ENCODE measurements at regions of chr16 and their contacts with region 1.

Region 1: DNA sequence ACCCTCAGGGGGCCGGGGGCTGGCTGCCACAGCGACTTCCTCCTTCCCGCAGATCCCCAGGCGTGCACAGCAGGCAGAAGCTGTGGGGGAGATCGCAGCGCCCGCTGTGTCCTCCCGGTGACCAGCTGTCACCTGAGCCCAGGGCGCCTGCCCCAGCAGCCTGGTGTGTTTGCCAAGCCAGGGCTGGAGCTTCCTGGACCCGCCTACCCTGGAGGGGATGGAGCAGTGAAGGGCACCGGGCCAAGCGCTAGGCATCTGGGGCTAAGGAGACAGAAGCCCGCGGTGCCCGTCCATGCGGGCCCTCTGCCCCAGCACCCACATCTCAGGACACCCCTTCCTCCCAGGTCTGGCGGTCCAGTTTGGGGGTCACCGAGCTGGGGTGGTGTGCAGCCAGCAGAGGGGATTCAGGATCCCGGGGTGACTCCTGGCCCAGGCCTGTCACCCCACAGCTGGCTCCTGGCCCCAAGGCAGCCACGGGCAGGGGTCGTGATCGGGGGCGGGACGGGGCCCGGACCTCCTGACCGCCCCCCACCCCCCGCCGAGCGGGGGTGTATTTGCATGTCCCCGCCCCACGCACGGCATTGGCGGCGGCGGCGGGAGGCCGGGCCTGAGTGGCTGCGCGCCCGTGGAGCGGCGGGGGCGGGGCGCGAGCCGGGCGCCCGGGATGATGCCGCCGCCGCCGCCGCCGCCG is at the start of gene RAB26:
- ATAC-seq: peak; percentile 13 to 76 (median 70)
- H3K4me3 ChIP-seq: peak within 1 kb of the TSS; percentile 30 to 49 (median 32)
- H3K27ac ChIP-seq: peak within 1 kb of the TSS in 1 of 2 donors; percentile 54
- H3K4me1 ChIP-seq: peaks cover 38% of the 10 kb centered on the region in 2 donors
- total RNA-seq, gene RAB26: 3.3 to 22.2 (median 5.2) TPM

Region 2: GRCh38 chr16:2023098-2023925 is 124.8 kb before region 1 on chr16:
- in situ Hi-C with region 1: loop called in 6 of 9 experiments (anchors 10 to 25 kb)
- ATAC-seq: peak; percentile 70 to 83 (median 74)
- H3K4me3 ChIP-seq: peak overlapping the region; percentile 2 to 22 (median 9)
- H3K27ac ChIP-seq: peak overlapping the region in 1 of 2 donors; percentile 57
- H3K4me1 ChIP-seq: peaks cover 11 to 34% of the 10 kb centered on the region in 2 donors

Region 3: DNA sequence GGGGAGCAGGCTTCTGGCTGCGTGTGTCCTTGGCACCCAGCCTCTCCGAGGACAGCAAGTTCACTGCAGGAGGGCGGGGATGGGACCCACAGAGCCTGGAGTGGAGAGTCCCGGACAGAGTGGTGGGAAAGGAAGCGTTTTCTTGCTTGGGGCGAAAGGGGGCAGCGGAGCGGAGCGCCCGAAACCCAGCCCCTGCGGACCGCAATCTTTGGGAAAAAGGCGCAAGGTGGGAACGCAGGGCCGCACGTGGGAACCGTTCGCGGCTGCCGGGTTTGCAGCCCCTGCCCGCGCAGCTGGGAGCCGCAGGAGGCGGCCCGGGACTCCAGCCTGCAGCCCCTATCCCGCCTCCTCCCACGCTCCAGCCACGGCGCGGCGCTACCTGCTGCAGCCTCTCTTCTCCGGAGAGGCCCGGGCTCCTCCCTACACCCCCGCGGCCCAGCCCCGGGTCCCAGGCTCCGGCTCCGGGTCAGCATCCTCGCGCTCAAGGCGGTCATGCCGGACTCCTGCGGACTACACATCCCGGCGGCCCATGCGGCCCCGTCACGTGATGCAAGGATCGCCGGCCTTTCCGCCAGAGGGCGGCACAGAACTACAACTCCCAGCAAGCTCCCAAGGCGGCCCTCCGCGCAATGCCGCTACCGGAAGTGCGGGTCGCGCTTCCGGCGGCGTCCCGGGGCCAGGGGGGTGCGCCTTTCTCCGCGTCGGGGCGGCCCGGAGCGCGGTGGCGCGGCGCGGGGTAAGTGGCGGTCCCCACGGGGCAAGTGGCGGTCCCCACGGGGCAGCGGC is 100.6 kb before region 1 on chr16 and contains the starts of genes NTHL1 and TSC2:
- in situ Hi-C with region 1: loop called in 1 of 9 experiments (anchors 25 kb)
- ATAC-seq: peak; percentile 93 to 98 (median 96)
- H3K4me3 ChIP-seq: peak within 1 kb of the TSS; percentile 72 to 93 (median 77)
- H3K27ac ChIP-seq: peak within 1 kb of the TSS; percentile 22 to 43
- H3K4me1 ChIP-seq: peaks cover 9 to 11% of the 10 kb centered on the region in 2 donors
- total RNA-seq, gene NTHL1: 13.0 to 28.3 (median 18.8) TPM
- total RNA-seq, gene TSC2: 28.1 to 102 (median 53.2) TPM

Measured in motor neuron (in vitro differentiated cells).